ENCODE measurements at regions of chr10 and their contacts with region 1.

Region 1: GRCh38 chr10:110497438-110498086 is at the start of gene DUSP5:
- DNase-seq: peak; percentile 96
- H3K4me3 Mint-ChIP-seq: peak within 1 kb of the TSS; percentile 100
- H3K27ac Mint-ChIP-seq: peak within 1 kb of the TSS; percentile 97
- H3K4me1 Mint-ChIP-seq: peaks cover 62% of the 10 kb centered on the region
- H3K27me3 Mint-ChIP-seq: no peaks in the 10 kb centered on the region
- total RNA-seq, gene DUSP5: 140 and 141 TPM in 2 replicates

Region 2: DNA sequence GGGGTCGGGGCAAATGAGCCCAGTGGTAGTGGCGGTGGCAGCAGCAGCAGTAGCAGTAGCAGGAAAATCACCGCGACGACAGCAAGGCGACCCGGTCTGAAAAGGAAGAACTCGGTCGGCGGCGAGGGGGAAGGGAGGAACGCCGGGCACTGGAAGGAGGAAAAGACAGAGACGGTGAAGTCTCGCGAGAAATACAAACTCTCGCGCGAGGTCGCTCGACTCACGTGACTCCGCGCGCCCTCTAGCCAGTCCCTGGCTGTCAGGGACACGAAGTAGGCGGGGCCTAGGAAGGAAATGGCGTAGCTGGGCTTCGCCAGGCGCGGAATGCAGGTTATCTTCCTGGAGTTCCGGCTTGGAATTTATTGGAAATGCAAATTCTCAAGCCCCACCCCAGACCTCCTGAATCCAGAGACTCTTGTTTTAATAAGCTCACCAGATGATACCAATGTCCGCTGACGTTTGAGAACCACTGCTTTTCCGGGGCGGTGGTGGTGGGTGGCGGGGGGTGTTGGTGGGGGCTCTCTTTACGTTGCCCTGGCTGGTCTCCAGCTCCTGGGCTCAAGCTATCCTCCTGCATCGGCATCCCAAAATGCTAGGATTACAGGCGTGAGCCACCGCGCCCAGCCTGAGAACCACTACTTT is 192.7 kb before region 1 on chr10 and contains the start of gene SMNDC1:
- intact Hi-C with region 1: loop called (anchors 1 kb)
- DNase-seq: peak; percentile 96
- H3K4me3 Mint-ChIP-seq: peak within 1 kb of the TSS; percentile 97
- H3K27ac Mint-ChIP-seq: peak within 1 kb of the TSS; percentile 96
- H3K4me1 Mint-ChIP-seq: peaks cover 48% of the 10 kb centered on the region
- H3K27me3 Mint-ChIP-seq: no peaks in the 10 kb centered on the region
- total RNA-seq, gene SMNDC1: 47.8 and 48.0 TPM in 2 replicates

Region 3: DNA sequence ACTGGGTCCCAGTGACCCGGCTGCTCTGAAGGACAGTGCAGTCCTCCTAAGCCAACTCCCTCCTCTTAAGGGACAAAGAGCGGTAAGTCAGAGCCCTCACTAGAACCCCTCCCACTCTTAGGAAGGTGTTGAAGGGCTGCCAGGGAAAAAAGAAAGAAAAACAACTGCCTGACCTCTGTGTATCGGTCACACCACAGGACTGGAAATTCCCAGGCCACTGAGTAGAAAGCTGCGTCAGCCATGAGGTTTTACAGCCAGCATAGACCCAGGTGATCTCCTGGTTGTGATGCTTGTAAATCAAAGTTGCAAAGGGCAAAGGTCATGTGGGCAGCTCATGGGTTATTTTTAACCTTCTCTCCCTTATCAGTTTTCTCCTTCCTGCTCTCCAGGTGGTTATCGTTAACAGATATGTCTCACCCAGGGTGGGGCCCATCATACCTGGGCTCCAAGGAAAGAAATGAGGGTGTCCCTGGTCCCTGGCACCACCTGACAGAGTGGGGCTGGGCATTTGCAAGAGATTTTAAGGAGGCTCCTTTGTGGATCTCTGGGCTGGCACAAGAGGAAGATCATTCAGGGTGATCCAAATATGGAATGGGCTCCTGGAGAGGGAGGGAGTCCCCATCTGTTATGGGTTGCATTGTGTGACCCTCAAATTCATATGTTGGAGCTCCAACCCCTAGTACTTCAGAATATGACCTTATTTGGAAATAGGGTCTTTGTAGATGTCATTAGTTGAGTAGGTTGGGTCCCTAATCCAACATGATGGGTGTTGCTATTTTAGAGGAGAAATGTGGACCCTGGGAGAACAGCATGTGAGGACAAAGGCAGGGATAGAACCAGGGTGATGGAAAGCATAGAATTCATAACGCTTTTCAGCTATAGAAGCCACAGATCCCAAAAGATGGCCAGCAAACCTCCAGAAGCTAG is 101.6 kb before region 1 on chr10:
- intact Hi-C with region 1: loop called (anchors 1 kb)
- DNase-seq: peak; percentile 67
- H3K4me3 Mint-ChIP-seq: peak overlapping the region; percentile 15
- H3K27ac Mint-ChIP-seq: peak overlapping the region; percentile 77
- H3K4me1 Mint-ChIP-seq: peaks cover 75% of the 10 kb centered on the region
- H3K27me3 Mint-ChIP-seq: no peaks in the 10 kb centered on the region

Region 4: DNA sequence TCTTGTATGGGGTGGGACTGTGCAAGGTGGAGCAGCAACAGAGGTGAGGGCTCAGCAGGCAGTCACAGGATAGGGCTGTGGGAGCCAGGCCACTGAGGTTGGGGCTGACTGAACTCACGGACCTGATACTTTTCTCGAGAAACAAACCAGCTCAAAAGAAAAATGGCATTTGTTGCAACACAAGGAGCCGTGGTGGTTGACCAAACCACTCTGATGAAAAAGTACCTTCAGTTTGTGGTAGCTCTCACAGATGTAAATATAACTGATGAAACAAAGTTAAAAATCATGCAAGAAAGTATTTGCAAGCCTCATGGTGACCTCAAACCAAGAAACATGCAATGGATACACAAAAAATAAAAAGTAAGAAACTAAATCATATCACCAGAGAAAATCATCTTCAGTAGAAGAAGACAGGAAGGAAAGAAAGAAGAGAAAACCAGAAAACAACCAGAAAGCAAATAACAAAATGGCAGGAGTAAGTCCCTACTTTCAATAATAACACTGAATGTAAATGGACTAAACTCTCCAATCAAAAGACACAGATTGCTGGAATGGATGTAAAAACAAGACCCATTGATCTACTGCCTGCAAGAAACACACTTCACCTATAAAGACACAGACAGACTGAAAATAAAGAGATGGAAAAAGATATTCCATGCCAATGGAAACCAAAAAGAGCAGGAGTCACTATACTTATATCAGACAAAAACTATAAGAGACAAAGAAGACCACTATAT is 48.7 kb before region 1 on chr10:
- intact Hi-C with region 1: loop called (anchors 2 kb)
- DNase-seq: peak; percentile 35
- H3K4me3 Mint-ChIP-seq: no peak overlapping the region
- H3K27ac Mint-ChIP-seq: peak overlapping the region; percentile 93
- H3K4me1 Mint-ChIP-seq: peaks cover 28% of the 10 kb centered on the region
- H3K27me3 Mint-ChIP-seq: peaks cover 8% of the 10 kb centered on the region

Region 5: DNA sequence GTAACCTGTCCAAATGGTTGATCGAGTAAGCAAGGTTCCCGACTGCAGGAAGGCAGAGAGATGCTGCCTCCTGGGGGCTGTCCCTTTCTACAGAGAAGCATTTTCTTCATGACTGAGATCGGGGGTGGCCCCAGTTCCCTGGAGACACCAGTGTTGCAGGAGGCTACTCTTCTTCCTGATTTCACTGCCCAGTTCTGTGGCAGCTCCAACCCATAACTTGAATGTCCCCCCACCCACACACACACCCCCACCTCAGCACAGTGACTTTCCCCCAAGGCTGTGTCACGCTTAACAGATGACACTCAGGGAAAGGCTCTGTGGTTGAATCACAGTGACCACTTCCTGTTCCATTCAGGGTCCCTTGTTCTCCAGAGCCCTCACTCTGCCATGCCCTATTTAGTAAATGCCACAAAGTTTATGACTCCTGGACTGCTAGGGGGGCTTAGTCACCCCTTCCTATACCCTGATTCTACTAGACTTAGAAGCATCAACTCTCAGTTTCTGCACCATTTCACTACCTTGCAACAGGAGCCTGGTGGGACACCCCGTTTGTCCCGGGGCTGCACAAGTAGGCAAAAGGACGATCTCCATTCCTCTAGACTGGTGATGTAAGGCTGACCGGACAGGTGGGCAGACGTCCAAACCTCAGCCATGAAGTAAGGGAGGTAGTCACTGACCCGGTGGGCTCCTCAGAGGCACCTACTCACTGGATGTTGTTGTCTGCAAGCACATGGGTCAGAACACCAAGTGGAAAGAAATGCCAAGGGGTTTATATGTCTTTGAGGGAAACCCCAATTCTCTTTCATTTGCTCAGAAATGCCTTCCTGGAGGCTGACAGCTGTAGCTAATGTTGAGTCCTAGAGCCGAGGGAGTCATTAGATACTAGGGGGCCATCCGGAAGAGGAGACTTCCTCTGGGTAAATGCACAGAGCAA is 38.7 kb after region 1 on chr10:
- intact Hi-C with region 1: loop called (anchors 1 kb)
- DNase-seq: peak; percentile 49
- H3K4me3 Mint-ChIP-seq: peak overlapping the region; percentile 48
- H3K27ac Mint-ChIP-seq: peak overlapping the region; percentile 89
- H3K4me1 Mint-ChIP-seq: peaks cover 60% of the 10 kb centered on the region
- H3K27me3 Mint-ChIP-seq: no peaks in the 10 kb centered on the region

Region 6: DNA sequence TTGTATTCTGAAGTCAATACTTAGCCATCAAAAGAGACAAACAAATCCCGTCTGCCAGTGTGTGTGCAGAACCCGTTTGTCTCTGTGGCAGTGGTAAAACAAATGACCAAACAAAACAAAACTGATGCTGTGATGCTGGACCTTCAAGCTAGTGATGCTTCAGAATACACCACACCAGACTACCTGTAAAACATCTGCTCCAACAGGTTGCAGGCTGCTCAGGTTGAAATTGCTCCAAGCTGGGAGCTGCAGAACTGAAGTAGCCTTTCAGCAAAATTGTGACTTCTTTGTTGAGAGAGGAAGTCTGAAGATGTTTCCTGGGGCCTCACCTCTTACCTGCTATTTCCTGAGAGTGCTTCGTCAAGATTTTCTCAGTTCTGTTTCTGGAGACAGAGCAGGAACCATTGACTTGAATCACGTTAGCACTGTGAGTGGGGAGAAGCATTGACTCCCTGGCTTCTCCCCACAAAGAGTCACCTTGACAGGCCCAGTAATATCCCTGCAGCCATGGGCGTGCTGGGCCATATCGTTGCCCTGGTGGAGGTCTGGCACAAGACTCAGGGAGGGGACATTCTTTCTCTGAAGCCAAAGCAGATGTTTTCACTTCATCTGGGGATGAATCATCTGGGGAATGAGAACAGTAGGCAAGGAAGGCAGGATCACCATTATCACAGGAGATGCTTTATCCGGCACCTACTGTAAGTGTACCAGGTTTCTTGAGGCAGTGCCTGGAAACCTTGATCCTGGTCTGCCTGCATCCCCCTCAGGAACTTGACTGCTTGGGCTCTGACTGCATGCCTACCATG is 226.8 kb after region 1 on chr10:
- intact Hi-C with region 1: no loop called
- DNase-seq: no peak
- H3K4me3 Mint-ChIP-seq: no peak overlapping the region
- H3K27ac Mint-ChIP-seq: no peak overlapping the region
- H3K4me1 Mint-ChIP-seq: peaks cover 25% of the 10 kb centered on the region
- H3K27me3 Mint-ChIP-seq: no peaks in the 10 kb centered on the region

Region 7: DNA sequence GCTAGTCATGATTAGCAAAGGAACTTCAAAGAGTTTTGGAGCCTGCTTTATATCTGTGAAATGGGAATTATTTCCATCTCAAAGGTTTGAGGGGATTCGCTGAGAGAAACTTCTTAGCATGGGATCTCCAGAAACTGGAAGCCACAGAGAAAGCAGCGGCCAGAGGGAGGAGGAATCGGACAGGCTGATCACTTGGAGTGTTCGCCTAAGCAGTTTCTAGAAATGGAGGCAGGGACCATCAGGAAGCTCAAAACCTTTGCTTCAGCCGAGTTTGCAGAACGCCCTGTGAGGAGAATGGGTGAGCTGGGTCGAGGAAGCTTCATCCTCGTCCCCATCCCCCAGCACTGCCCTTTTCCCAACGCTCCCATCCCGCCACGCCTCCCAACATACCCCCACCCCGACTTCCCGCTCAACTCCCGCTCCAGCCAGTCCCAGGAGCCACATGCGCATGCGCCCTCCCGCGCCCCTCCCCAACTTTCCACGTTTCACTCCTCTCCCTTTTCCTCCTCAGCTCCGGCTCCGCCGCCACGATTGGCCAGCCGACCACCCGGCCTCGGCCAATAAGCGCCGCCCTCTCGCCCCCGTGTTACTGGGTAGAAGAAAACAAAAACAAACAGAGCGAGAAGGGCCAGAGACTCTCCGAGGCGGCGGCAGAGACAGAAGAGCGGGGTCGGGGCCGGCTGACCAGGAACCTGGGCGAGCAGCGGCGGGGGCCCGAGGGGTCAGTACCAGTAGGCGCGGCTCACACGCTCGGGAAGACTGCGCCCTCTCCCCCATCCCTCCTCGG is 373.9 kb after region 1 on chr10 and contains the start of gene PDCD4:
- intact Hi-C with region 1: loop called (anchors 2 kb)
- DNase-seq: peak; percentile 94
- H3K4me3 Mint-ChIP-seq: peak within 1 kb of the TSS; percentile 96
- H3K27ac Mint-ChIP-seq: peak within 1 kb of the TSS; percentile 98
- H3K4me1 Mint-ChIP-seq: peaks cover 74% of the 10 kb centered on the region
- H3K27me3 Mint-ChIP-seq: no peaks in the 10 kb centered on the region
- total RNA-seq, gene PDCD4: 46.1 and 51.8 TPM in 2 replicates